ENCODE measurements at regions of chr3 and their contacts with region 1.

Region 1: DNA sequence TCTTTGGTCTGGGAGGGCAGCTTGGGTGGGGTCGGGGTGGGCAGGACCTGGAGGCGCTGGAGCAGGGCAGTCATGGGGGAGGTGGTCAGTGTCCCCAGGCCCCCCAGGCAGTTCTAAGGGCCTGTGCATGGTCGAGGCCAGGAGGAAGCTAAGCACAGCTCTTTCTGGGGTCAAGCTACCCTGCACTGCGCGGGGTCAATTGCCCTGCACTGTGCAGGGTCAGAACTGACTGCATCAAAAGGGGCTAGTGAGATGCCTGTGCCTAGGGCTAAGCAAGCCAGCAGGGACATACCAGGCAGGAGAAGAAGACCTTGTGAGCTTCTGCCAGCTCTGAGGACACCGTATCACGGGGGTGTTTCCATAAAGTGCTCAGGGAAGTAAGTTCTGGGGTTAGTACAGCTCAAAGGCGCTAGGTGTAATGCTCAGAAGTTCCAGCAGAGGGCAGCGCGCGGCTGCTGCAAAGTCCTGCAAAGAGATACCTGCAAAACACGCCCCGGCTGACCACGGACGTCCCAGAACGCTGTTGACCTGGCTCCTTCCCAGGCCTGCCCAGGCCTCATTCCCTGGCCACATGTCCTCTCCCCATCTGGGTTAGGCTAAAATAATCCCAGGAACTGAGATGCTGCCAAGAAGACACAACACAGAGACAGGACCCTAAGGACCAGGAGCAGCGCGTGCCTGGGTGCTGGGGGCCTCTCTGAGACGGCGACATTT is 18.8 kb upstream of the IQSEC1 start:
- DNase-seq: peak; percentile 86
- H3K4me3 Mint-ChIP-seq: no peak overlapping the region
- H3K27ac Mint-ChIP-seq: no peak overlapping the region
- H3K4me1 Mint-ChIP-seq: no peaks in the 10 kb centered on the region
- H3K27me3 Mint-ChIP-seq: peaks cover 3% of the 10 kb centered on the region

Region 2: DNA sequence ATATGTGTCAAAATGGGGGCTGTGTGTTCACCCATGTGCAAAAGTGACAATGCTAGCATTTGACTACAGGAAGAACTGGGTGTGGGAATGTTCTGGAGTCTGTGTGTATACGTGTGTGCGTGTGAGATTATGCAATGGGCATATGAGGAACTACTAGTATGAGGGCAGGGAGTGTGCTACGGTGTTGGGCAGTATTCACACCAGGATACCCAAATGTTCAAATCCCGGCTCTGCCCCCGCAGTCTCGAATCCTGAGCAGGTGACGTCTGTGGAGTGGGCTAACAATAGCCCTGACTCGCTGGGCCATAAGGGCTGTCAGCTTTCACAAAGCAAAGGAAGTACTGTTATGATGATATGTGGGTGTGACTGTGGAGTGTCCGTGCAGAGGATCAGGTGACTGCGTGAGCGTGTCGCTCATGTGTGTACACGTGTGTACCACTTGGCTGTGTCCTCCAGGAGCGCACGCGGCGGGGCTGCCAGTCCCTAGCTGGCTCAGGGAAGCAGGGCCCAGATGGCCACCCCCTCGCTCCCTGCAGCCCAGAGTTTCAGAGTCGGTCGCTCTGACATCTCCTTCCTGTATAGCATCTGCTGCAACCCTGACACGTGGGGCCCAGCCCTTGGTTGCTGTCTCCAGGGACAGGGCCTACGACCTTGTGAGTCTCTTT is 46.0 kb before region 1 on chr3:
- CTCF ChIA-PET with region 1: no interaction called
- POLR2A ChIA-PET with region 1: no interaction called
- intact Hi-C with region 1: no loop called
- DNase-seq: peak; percentile 17
- H3K4me3 Mint-ChIP-seq: no peak overlapping the region
- H3K27ac Mint-ChIP-seq: no peak overlapping the region
- H3K4me1 Mint-ChIP-seq: peaks cover 11% of the 10 kb centered on the region
- H3K27me3 Mint-ChIP-seq: no peaks in the 10 kb centered on the region

Region 3: DNA sequence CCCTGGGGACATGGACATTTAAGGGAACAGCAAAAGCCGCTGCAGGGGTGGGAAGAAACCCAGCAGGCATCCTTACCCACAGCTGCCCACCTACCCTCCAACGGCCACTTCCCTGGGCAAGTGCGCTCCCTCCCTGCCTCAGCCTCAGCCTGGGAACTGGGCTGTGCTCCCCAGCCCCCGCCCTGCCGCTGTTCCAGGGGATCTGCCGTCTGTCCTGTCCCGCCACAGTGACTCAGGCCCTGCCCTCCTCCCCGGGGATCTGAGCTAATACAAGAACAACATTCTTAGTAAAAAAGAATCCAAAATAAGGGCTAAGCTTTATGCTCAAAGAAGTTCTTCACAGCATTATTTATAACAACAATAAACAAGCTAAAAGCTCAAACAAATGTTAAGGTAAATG is 11.5 kb before region 1 on chr3:
- CTCF ChIA-PET with region 1: interaction called, 15 read pairs
- POLR2A ChIA-PET with region 1: no interaction called
- intact Hi-C with region 1: no loop called
- DNase-seq: no peak
- H3K4me3 Mint-ChIP-seq: no peak overlapping the region
- H3K27ac Mint-ChIP-seq: no peak overlapping the region
- H3K4me1 Mint-ChIP-seq: no peaks in the 10 kb centered on the region
- H3K27me3 Mint-ChIP-seq: peaks cover under 1% of the 10 kb centered on the region

Region 4: DNA sequence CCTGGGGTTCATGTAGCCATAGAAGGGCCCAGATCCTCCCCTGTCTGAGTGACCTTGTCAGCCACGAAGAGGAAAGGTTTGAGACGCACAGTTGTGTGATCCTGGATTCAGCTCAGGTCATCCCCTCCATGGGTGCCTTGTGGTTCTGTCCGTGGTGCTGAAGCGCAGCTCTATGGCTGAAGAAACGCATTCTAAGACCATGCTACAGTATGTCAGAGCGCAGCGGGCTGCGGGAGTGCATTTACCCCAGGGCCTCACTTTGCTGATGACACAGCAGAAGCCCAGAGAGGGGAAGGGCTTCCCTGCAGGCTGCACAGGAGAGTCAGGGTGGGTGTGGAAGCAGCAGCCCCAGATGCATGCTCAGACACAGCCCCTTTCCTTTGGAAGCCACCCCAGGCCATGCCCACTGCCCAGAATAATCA is 49.9 kb after region 1 on chr3:
- CTCF ChIA-PET with region 1: no interaction called
- POLR2A ChIA-PET with region 1: no interaction called
- intact Hi-C with region 1: no loop called
- DNase-seq: peak; percentile 44
- H3K4me3 Mint-ChIP-seq: no peak overlapping the region
- H3K27ac Mint-ChIP-seq: no peak overlapping the region
- H3K4me1 Mint-ChIP-seq: no peaks in the 10 kb centered on the region
- H3K27me3 Mint-ChIP-seq: peaks cover 12% of the 10 kb centered on the region

Region 5: GRCh38 chr3:13235079-13235478 is 143.0 kb after region 1 on chr3:
- CTCF ChIA-PET with region 1: interaction called, 11 read pairs
- POLR2A ChIA-PET with region 1: no interaction called
- intact Hi-C with region 1: loop called (anchors 10 kb)
- DNase-seq: peak; percentile 14
- H3K4me3 Mint-ChIP-seq: no peak overlapping the region
- H3K27ac Mint-ChIP-seq: no peak overlapping the region
- H3K4me1 Mint-ChIP-seq: peaks cover 20% of the 10 kb centered on the region
- H3K27me3 Mint-ChIP-seq: peaks cover 4% of the 10 kb centered on the region

Region 6: GRCh38 chr3:13308380-13308801 is 216.3 kb after region 1 on chr3:
- CTCF ChIA-PET with region 1: interaction called, 10 read pairs
- POLR2A ChIA-PET with region 1: no interaction called
- intact Hi-C with region 1: no loop called
- DNase-seq: peak; percentile 41
- H3K4me3 Mint-ChIP-seq: no peak overlapping the region
- H3K27ac Mint-ChIP-seq: no peak overlapping the region
- H3K4me1 Mint-ChIP-seq: peaks cover 4% of the 10 kb centered on the region
- H3K27me3 Mint-ChIP-seq: no peaks in the 10 kb centered on the region

Region 7: DNA sequence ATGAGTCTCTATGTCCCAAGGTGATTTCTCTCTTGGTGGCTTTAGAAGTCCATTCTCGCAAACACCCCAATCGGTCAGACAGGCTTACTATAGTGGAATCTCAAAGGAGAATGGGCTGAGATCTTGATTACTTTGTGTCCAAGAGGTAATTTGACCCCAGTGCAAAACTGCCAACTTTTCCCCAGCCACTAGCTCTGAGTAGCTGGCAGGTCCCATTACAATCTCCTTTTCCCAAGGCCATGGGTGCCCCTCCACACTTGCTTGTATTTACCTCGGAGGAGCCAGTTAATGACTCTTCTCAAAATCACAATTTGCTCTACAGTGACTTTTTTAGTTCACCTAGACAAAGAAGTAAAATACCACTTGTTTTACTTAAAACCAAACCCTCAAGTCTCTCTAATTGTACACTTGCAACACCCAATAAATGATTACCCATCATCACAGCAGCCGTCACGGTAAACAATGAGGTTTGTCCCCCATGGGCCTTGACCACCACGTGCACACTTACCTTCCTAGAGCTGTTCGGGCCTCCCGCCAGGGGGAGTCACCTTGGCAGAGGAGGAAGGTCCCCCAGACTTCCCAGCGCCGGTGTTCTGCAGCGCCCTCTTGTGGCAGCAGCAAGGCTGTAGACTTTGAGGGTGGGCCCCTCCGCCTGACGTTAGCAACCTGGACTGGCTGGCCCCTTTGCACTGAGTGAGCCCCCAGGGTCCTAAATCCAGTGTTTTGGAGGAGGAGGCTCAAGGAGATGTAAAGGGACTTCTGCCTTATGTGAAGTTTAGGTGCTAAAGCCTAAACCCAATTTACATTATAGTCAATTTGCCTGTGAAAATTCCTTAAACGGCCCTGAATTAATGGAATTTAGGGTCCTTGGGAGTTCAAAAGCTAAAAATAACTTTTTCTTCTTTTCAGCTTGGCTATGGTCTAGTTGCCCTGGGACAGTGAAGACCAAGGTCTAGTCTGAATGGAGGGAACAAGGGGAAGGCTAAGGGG is 369.4 kb after region 1 on chr3:
- CTCF ChIA-PET with region 1: interaction called, 27 read pairs
- POLR2A ChIA-PET with region 1: no interaction called
- intact Hi-C with region 1: no loop called
- DNase-seq: peak; percentile 86
- H3K4me3 Mint-ChIP-seq: no peak overlapping the region
- H3K27ac Mint-ChIP-seq: no peak overlapping the region
- H3K4me1 Mint-ChIP-seq: peaks cover 2% of the 10 kb centered on the region
- H3K27me3 Mint-ChIP-seq: peaks cover 4% of the 10 kb centered on the region

Measured in activated CD4-positive, alpha-beta memory T cell treated with anti-CD3 and anti-CD28 coated beads for 36 hours (primary cell).